ENCODE measurements at regions of chr19 and their contacts with region 1.

Region 1: DNA sequence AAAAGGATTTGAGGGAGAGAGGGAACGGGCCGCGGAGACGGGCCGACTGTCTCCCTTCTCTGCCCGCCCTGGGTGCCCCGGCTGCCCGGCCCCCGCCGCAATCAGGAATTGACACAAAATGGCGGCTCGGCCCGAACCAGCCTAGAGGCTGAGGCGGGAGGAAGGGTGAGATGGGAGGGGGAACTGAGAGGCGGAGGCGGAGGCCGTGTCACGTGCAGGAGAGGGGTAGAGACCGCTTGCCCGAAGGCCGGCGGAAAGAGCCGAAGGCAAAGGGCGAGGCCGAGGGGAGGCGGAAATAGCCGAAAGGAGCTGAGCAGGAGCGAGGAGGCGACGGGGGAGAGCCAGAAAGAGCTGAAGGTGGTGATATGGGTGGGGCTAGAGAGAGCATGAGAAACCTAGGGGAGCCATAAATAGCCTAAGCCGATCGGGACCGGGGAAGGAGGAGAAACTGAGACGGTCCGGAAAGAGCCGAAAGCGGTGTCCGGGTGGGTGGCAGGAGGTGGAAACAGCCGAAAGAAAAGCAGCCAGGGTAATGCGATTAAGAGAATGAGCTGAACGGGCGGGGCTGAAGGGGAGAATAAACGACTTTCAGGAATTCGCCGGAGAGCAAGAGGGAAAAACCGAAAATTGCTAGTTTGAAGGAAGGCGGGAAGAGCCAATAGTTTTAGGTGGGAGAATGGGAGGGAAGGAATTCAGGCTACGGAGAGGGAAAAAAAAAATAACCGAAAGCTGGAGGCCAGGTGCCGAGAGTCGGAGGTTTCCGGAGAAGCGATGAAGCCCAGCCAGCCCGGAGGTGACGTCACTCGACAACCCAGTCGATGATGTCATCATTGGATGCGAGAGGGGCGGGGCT is at the start of gene ZC3H4:
- DNase-seq: peak; percentile 100
- H3K4me3 Mint-ChIP-seq: peak within 1 kb of the TSS; percentile 96
- H3K27ac Mint-ChIP-seq: peak within 1 kb of the TSS; percentile 100
- H3K4me1 Mint-ChIP-seq: peaks cover 31% of the 10 kb centered on the region
- H3K27me3 Mint-ChIP-seq: no peaks in the 10 kb centered on the region
- total RNA-seq, gene ZC3H4: 97.3 and 103 TPM in 2 replicates

Region 2: DNA sequence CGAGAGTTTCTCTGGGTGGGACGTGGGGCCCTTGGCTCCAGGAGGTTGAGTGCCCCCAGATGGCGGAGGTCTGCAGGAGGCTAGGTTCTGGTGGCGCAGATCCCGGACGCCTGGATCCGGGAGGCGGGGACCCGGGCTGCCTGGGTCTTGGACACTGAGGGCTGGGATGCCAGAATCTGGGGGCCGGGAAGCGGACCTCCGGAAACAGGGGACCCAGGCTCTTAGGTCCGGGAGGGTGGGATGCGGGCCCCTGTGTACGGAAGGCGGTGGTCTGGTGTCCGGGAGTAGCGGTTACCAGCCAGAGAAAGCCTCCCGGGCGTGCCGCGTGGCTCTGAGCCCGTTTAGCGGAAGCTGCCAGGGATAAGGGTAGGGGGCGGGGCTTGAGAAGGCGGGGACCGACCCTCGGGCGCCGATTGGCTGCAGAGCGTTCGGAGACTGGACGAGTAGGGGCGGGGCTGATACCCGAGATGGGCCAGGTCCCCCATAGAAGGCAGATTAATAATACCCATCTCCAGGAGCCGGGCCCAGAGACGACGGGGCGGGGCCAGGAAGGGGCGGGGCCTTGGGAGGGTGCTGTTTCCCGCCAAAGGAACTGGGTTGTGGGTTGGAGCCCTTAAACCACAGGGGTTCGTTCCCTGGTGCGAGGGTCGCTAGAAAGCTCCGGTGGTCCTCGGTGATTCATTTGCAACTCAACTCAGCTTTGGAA is 324.8 kb before region 1 on chr19 and contains the start of gene SLC1A5:
- intact Hi-C with region 1: loop called (anchors 5 kb)
- DNase-seq: peak; percentile 99
- H3K4me3 Mint-ChIP-seq: peak within 1 kb of the TSS; percentile 94
- H3K27ac Mint-ChIP-seq: peak within 1 kb of the TSS; percentile 93
- H3K4me1 Mint-ChIP-seq: peaks cover 54% of the 10 kb centered on the region
- H3K27me3 Mint-ChIP-seq: no peaks in the 10 kb centered on the region
- total RNA-seq, gene SLC1A5: 220 and 224 TPM in 2 replicates

Region 3: DNA sequence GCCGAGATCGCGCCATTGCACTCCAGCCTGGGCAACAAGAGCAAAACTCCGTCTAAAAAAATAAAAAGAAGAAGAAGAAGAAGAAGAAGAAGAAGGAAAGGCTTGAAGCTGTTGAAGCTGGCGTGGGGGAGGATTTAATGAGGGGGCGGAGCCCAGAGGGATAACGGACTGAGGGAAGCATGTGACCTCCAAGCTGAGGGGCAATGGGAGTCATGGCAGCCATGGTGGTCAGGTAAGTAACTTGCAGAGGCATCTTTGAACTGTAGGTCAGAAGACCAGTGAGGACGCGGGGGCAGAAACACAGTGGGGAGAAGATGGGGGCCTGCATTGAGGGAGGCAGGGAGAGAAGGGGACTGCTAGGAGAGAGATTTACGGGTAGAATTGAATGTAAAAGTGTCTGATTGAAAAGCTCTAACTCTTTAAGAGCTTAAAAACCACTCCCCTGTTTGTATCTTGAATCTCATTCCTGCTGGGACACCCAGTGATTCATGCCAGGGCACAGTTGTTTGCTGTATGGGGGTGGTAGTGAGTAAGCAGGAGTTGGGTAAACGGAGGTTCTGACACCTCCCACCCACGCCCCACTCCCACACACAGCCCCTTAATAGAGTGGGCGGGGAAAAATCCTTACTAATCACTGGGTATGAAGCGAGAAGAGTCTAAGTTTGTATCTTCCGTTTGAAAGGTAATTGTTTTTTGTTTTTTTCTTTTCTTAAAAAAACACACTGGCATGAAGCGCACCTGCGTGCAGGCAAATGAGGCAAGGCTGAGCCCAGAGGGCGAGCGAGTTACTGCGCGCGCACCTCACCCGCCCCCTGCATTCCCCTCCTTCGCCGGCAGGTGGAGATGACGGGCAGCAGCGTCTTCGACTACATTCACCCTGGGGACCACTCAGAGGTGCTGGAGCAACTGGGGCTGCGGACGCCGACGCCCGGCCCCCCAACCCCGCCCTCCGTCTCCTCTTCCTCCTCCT is 77.8 kb before region 1 on chr19:
- intact Hi-C with region 1: loop called (anchors 2 kb)
- DNase-seq: peak; percentile 100
- H3K4me3 Mint-ChIP-seq: peak overlapping the region; percentile 86
- H3K27ac Mint-ChIP-seq: peak overlapping the region; percentile 92
- H3K4me1 Mint-ChIP-seq: peaks cover 25% of the 10 kb centered on the region
- H3K27me3 Mint-ChIP-seq: peaks cover 10% of the 10 kb centered on the region

Region 4: DNA sequence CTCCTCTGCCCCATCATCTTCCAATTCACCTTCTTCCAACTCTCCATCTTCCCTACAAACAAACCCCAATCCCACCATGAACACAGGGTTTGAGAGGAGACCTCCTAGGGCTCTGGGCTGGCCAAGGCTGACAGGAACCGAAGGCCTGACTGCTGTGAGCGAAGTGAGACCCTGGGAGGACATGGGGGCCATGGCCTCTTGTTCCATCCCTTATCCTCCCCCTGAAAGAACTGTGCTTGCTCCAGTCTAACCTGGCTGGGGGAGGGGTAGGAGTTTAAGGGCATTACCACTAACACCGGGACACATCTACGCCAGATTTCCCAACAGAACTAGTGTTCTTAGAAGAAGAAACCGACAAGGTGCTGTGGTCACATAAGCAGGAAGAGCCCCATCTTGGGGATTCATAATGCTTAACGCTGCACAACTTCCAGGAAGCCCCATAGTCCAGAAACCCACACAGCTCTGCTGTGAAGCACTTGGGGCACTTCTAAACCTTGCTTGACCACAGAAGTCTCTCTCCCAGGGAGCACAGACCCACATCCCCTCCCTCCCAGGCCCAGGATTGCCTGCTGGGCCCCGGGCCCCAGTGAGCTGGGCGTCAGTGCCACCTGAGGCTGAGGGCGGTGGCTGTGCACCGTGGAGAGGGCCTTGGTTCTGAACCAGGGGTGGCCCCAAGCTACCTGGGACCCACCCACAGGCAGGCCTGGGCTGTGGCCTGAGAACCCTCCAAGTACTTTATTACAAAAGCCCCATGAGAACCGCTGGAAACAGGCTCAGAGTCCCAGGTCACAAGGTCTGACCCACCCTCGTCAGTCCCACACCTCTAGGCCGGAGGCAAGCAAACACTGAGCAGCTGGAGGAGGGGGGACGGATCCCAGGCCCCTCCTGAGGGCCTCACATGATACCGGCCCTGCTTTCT is 18.4 kb before region 1 on chr19:
- intact Hi-C with region 1: loop called (anchors 1 kb)
- DNase-seq: peak; percentile 88
- H3K4me3 Mint-ChIP-seq: peak overlapping the region; percentile 86
- H3K27ac Mint-ChIP-seq: peak overlapping the region; percentile 94
- H3K4me1 Mint-ChIP-seq: peaks cover 62% of the 10 kb centered on the region
- H3K27me3 Mint-ChIP-seq: no peaks in the 10 kb centered on the region

Region 5: DNA sequence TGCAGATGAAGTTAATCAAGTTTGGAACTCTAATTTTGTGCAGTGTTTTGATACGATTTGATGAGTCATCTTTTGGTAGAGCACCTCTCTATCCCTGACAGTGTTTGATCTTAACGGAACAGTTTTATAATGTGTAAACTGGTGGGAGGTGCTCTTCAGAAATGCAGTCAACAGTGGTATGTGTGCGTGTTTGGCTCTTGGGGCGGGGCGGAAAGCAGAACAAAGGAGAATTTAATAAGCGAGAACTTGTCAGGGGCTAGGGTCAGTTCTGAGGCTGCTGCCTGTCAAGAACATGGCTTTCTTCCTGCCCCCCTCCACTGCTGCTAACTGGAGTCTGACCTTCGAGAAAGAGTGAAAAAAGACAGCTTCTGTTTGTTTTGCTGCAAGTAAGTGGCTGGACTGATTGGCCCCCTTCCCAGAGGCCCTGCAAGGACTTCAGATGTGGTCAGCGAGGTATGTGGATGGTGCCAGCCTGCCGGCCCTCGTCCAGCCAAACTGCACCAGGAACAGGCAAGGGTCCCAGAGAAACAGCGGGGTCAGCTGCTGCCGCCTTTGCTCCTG is 77.0 kb after region 1 on chr19:
- intact Hi-C with region 1: loop called (anchors 2 kb)
- DNase-seq: peak; percentile 86
- H3K4me3 Mint-ChIP-seq: peak overlapping the region; percentile 62
- H3K27ac Mint-ChIP-seq: peak overlapping the region; percentile 74
- H3K4me1 Mint-ChIP-seq: peaks cover 51% of the 10 kb centered on the region
- H3K27me3 Mint-ChIP-seq: no peaks in the 10 kb centered on the region